ENCODE measurements at regions of chr2 and their contacts with region 1.

Region 1: DNA sequence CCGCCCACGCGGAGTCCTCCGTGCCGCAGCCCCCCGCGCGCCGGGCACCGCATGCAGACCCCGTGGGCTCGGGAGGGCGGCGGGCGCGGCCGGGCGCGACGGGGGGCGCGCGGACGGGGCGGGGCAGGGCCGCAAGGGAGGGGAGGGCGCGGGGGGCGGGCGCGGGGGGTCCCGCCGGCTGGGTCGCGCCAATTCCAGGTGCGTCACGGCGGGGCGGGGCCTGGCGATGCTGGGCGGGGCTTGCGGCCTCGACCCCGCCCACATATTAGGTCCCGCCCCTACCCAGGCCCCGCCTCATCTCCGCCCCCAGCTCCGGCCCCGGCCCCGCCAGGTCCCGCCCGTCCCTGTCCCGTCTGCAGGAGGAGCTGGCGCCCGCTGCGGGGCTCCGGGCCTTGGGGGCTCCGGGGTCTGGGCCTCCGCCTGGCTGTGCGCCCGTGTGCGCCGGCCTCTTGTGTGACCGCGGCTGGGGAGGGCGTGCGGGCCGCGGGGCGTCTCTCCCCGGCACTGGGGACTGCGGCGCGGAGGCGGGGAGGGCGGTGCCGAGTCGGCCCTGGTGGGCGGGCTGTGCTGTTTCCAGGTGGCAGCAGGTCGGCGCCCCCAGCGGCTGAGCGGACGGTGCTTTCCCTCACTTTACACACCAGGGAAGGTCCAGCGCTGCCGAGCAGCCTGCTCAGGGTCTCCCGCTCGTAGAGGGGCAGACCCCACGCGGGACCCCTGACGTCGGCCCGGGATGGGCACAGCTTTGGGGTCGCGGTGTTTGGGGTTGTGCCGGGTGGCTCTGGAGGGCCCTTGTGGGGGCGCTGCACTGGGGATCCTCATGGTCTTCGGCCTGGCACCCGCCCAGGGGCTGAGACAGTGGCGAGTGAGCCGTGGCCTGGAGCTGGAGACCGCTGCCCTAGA is 543 bp downstream of the ING5 start:
- DNase-seq: peak; percentile 89 to 91 (median 89)
- H3K4me3 ChIP-seq: peak overlapping the region; percentile 61 to 72
- H3K4me3 Mint-ChIP-seq: peak overlapping the region; percentile 76 to 87 (median 83)
- H3K27ac ChIP-seq: peak overlapping the region; percentile 72
- H3K27ac Mint-ChIP-seq: peak overlapping the region in 6 of 7 donors; percentile 53 to 90 (median 86)
- H3K4me1 ChIP-seq: peaks cover 14% of the 10 kb centered on the region
- H3K4me1 Mint-ChIP-seq: peaks cover 12 to 41% (median 26%) of the 10 kb centered on the region in 4 donors
- H3K27me3 ChIP-seq: no peaks in the 10 kb centered on the region
- H3K27me3 Mint-ChIP-seq: no peaks in the 10 kb centered on the region

Region 2: GRCh38 chr2:241355983-241356870 is 346.2 kb before region 1 on chr2 and contains the start of gene FARP2:
- CTCF ChIA-PET with region 1: no interaction called
- POLR2A ChIA-PET with region 1: no interaction called
- intact Hi-C with region 1: loop called (anchors 10 kb)
- DNase-seq: peak; percentile 97 to 99 (median 98)
- H3K4me3 ChIP-seq: peak within 1 kb of the TSS; percentile 47 to 63
- H3K4me3 Mint-ChIP-seq: peak within 1 kb of the TSS; percentile 82 to 89 (median 86)
- H3K27ac ChIP-seq: peak within 1 kb of the TSS; percentile 57
- H3K27ac Mint-ChIP-seq: peak within 1 kb of the TSS; percentile 77 to 97 (median 93)
- H3K4me1 ChIP-seq: peaks cover 15% of the 10 kb centered on the region
- H3K4me1 Mint-ChIP-seq: peaks cover 6 to 26% (median 15%) of the 10 kb centered on the region in 4 donors
- H3K27me3 ChIP-seq: no peaks in the 10 kb centered on the region
- H3K27me3 Mint-ChIP-seq: no peaks in the 10 kb centered on the region
- total RNA-seq, gene FARP2: 17.2 to 21.8 TPM

Region 3: GRCh38 chr2:241637000-241637791 is 65.2 kb before region 1 on chr2 and contains the starts of genes ATG4B and THAP4:
- CTCF ChIA-PET with region 1: no interaction called
- POLR2A ChIA-PET with region 1: interaction called, 5 read pairs
- intact Hi-C with region 1: loop called (anchors 1 kb)
- DNase-seq: peak; percentile 73 to 89 (median 78)
- H3K4me3 ChIP-seq: peak within 1 kb of the TSS; percentile 65 to 90
- H3K4me3 Mint-ChIP-seq: peak within 1 kb of the TSS; percentile 86 to 98 (median 94)
- H3K27ac ChIP-seq: peak within 1 kb of the TSS; percentile 88
- H3K27ac Mint-ChIP-seq: peak within 1 kb of the TSS; percentile 82 to 98 (median 93)
- H3K4me1 ChIP-seq: peaks cover 35% of the 10 kb centered on the region
- H3K4me1 Mint-ChIP-seq: peaks cover 36 to 71% (median 48%) of the 10 kb centered on the region in 4 donors
- H3K27me3 ChIP-seq: no peaks in the 10 kb centered on the region
- H3K27me3 Mint-ChIP-seq: no peaks in the 10 kb centered on the region
- total RNA-seq, gene ATG4B: 87.7 to 96.9 TPM
- total RNA-seq, gene THAP4: 27.8 to 28.2 TPM

Region 4: GRCh38 chr2:241724259-241724974 is 22.0 kb after region 1 on chr2:
- CTCF ChIA-PET with region 1: interaction called, 3 read pairs
- POLR2A ChIA-PET with region 1: interaction called, 12 read pairs
- intact Hi-C with region 1: no loop called
- DNase-seq: peak in 1 of 5 donors; percentile 36
- H3K4me3 ChIP-seq: no peak overlapping the region
- H3K4me3 Mint-ChIP-seq: no peak overlapping the region
- H3K27ac ChIP-seq: no peak overlapping the region
- H3K27ac Mint-ChIP-seq: no peak overlapping the region
- H3K4me1 ChIP-seq: no peaks in the 10 kb centered on the region
- H3K4me1 Mint-ChIP-seq: no peaks in the 10 kb centered on the region
- H3K27me3 ChIP-seq: no peaks in the 10 kb centered on the region
- H3K27me3 Mint-ChIP-seq: no peaks in the 10 kb centered on the region

Region 5: GRCh38 chr2:241762933-241763369 is 60.6 kb after region 1 on chr2:
- CTCF ChIA-PET with region 1: no interaction called
- POLR2A ChIA-PET with region 1: interaction called, 10 read pairs
- intact Hi-C with region 1: no loop called
- DNase-seq: peak; percentile 78 to 92 (median 85)
- H3K4me3 ChIP-seq: peak overlapping the region in 1 of 2 donors; percentile 46
- H3K4me3 Mint-ChIP-seq: peak overlapping the region; percentile 59 to 85 (median 83)
- H3K27ac ChIP-seq: peak overlapping the region; percentile 56
- H3K27ac Mint-ChIP-seq: peak overlapping the region; percentile 89 to 99 (median 97)
- H3K4me1 ChIP-seq: peaks cover 42% of the 10 kb centered on the region
- H3K4me1 Mint-ChIP-seq: peaks cover 27 to 51% (median 35%) of the 10 kb centered on the region in 4 donors
- H3K27me3 ChIP-seq: no peaks in the 10 kb centered on the region
- H3K27me3 Mint-ChIP-seq: no peaks in the 10 kb centered on the region

Region 6: GRCh38 chr2:241865957-241866789 is 163.8 kb after region 1 on chr2:
- CTCF ChIA-PET with region 1: no interaction called
- POLR2A ChIA-PET with region 1: interaction called, 17 read pairs
- intact Hi-C with region 1: no loop called
- DNase-seq: no peak
- H3K4me3 ChIP-seq: no peak overlapping the region
- H3K4me3 Mint-ChIP-seq: peak overlapping the region in 3 of 8 donors; percentile 10 to 65 (median 56)
- H3K27ac ChIP-seq: no peak overlapping the region
- H3K27ac Mint-ChIP-seq: peak overlapping the region in 4 of 7 donors; percentile 24 to 87 (median 62)
- H3K4me1 ChIP-seq: peaks cover 78% of the 10 kb centered on the region
- H3K4me1 Mint-ChIP-seq: peaks cover 54 to 80% (median 65%) of the 10 kb centered on the region in 4 donors
- H3K27me3 ChIP-seq: no peaks in the 10 kb centered on the region
- H3K27me3 Mint-ChIP-seq: peaks cover 0 to 5% of the 10 kb centered on the region in 2 donors